MCF 10A (cell line): ENCODE measurements at regions of chr1 and their contacts with region 1.

Region 1: GRCh38 chr1:180154325-180155181 is at the start of gene QSOX1:
- DNase-seq: peak; percentile 92
- H3K4me3 Mint-ChIP-seq: peak within 1 kb of the TSS; percentile 98
- H3K27ac Mint-ChIP-seq: peak within 1 kb of the TSS; percentile 89
- H3K4me1 Mint-ChIP-seq: peaks cover 64% of the 10 kb centered on the region
- H3K27me3 Mint-ChIP-seq: no peaks in the 10 kb centered on the region
- CTCF ChIP-seq: peak; percentile 23
- total RNA-seq, gene QSOX1: 309 and 464 TPM in 2 replicates

Region 2: GRCh38 chr1:180092931-180093559 is 61.5 kb before region 1 on chr1:
- CTCF ChIA-PET with region 1: interaction called, 4 read pairs
- POLR2A ChIA-PET with region 1: interaction called, 10 read pairs
- intact Hi-C with region 1: loop called (anchors 1 kb)
- DNase-seq: peak; percentile 16
- H3K4me3 Mint-ChIP-seq: no peak overlapping the region
- H3K27ac Mint-ChIP-seq: peak overlapping the region; percentile 42
- H3K4me1 Mint-ChIP-seq: peaks cover 7% of the 10 kb centered on the region
- H3K27me3 Mint-ChIP-seq: no peaks in the 10 kb centered on the region
- CTCF ChIP-seq: no peak

Region 3: GRCh38 chr1:180101411-180101810 is 53.1 kb before region 1 on chr1:
- CTCF ChIA-PET with region 1: interaction called, 4 read pairs
- POLR2A ChIA-PET with region 1: interaction called, 10 read pairs
- intact Hi-C with region 1: loop called (anchors 1 kb)
- DNase-seq: no peak
- H3K4me3 Mint-ChIP-seq: no peak overlapping the region
- H3K27ac Mint-ChIP-seq: no peak overlapping the region
- H3K4me1 Mint-ChIP-seq: peaks cover 24% of the 10 kb centered on the region
- H3K27me3 Mint-ChIP-seq: no peaks in the 10 kb centered on the region
- CTCF ChIP-seq: no peak

Region 4: DNA sequence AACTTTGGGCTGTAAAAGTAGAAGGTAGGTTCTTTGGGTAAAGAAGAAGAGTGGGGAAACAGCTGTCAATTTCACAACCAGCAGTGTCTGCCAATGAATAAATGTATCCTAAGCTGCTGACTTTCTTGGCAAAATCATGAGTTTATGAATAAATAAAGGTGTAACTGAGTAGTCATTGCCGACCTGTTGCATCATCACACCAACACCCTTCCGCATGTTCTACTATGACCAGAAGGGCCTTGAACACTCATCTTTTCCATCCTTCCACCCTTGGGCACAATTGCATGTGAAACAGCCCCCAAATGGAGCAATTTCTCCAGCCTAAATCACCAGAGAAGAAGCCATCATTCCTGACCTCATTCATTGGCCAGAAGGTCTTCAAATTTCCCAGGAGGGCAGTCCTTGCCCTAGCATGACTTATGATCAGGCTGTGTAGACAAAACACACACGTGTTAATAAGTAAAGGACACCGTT is 31.1 kb before region 1 on chr1:
- CTCF ChIA-PET with region 1: interaction called, 7 read pairs
- POLR2A ChIA-PET with region 1: interaction called, 22 read pairs
- intact Hi-C with region 1: loop called (anchors 1 kb)
- DNase-seq: peak; percentile 96
- H3K4me3 Mint-ChIP-seq: no peak overlapping the region
- H3K27ac Mint-ChIP-seq: peak overlapping the region; percentile 80
- H3K4me1 Mint-ChIP-seq: peaks cover 25% of the 10 kb centered on the region
- H3K27me3 Mint-ChIP-seq: no peaks in the 10 kb centered on the region
- CTCF ChIP-seq: no peak

Region 5: DNA sequence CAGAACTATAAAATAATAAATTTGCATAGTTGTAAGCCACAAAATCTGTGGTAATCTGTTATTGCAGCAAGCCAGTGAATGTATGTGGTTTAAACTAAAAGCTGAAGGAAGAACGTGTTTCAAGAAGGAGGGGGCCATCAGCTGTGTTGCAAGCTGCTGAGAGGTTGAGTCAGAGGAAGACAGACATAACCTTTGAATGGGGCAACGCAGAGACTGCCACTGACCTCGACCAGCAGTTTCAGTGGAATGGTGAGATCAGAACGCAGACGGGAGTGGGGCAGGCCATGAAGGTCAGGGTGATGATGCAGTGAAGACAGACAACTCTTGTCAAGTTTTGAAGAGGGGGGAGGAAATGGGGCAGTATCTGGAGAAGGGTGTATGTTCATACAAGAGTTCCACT is 23.0 kb before region 1 on chr1:
- CTCF ChIA-PET with region 1: interaction called, 3 read pairs
- POLR2A ChIA-PET with region 1: interaction called, 10 read pairs
- intact Hi-C with region 1: no loop called
- DNase-seq: peak; percentile 88
- H3K4me3 Mint-ChIP-seq: no peak overlapping the region
- H3K27ac Mint-ChIP-seq: peak overlapping the region; percentile 2
- H3K4me1 Mint-ChIP-seq: peaks cover 27% of the 10 kb centered on the region
- H3K27me3 Mint-ChIP-seq: no peaks in the 10 kb centered on the region
- CTCF ChIP-seq: no peak

Region 6: DNA sequence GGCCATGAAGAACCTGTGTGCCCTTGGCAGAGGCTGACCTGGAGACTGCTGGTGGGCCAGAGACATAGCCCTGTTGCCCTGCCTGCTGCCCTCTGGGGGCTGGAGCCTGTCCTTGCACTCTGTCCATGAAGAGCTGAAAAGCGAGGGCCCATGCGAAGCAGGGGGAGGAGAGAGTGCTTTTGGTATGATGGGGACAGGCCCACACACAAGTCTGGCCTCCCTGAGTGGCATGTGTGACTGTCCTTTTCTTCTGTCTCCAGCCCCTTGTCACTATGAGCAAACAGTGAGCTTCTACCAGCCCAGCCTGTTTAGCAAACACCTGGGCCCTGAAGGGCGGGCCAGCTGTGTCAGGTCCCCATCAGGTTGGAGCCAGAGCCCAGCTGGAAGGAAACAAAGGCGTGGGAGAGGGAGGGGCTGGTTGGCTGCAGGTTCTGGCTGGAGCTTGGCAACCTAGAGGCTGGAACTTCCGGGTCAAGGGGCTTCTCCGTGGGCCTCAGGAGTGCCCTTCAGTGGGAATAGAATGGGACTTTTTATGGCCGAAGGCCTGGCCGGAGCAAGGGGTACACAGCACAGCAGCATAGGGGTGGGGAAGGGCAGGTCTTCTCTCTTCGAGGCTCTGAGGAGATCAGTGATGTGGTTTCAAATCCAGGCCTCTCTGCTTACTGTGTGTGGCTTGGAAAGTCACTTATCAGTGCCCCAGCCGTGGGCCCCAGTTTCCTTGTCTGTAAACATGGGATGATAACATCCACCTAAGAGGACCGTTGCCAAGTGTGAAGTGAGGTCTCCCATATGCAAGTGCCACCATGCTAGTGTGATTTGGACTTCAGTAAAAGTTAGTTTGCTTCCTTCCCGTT is 14.5 kb after region 1 on chr1:
- CTCF ChIA-PET with region 1: interaction called, 57 read pairs
- POLR2A ChIA-PET with region 1: interaction called, 106 read pairs
- intact Hi-C with region 1: loop called (anchors 1 kb)
- DNase-seq: peak; percentile 69
- H3K4me3 Mint-ChIP-seq: no peak overlapping the region
- H3K27ac Mint-ChIP-seq: peak overlapping the region; percentile 77
- H3K4me1 Mint-ChIP-seq: peaks cover 29% of the 10 kb centered on the region
- H3K27me3 Mint-ChIP-seq: no peaks in the 10 kb centered on the region
- CTCF ChIP-seq: peak; percentile 47